ENCODE measurements at regions of chr7 and their contacts with region 1.

Region 1: DNA sequence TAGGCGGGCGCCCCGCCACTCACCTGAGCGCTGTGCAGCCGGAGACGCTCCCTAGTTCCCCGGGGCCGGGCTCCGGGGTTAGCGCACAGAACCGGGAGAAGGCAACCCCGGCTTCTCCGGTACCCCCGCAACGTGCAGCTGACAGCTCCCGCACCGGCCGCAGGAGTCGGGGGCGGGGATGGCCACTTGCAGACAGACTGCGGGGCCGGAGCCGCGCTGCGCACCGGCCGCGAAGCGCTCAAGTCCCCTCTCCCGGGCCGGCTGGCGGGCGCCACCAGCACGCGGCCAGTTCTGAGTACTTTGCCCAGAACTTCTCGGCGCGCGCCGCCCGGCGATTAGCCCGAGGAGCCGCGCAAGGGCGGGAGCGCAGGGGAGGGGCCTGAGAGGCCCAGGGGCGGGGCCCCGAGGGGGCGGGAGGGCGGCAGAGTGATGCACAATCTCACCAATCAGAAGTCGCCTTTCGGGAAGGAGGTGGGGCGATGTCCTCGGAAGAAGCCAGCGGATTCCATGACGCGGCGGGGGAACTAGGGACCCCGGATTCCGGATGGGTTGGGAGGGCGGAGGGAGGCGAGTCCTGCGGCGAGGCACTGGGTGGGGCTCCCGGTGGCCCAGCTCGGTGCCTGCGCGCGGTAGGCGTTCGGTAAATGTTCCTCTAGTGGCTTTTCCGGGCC is at the start of gene OSBPL3:
- DNase-seq: peak; percentile 97
- H3K4me3 ChIP-seq: peak within 1 kb of the TSS; percentile 77 to 98 (median 86)
- H3K27ac ChIP-seq: peak within 1 kb of the TSS; percentile 86 to 90 (median 89)
- H3K4me1 ChIP-seq: peaks cover 0 to 30% (median 17%) of the 10 kb centered on the region in 4 donors
- H3K27me3 ChIP-seq: no peaks in the 10 kb centered on the region
- CTCF ChIP-seq: no peak
- EP300 ChIP-seq: no peak
- POLR2A ChIP-seq: peak; percentile 71
- total RNA-seq, gene OSBPL3: 6.7 to 20.6 (median 8.0) TPM

Region 2: GRCh38 chr7:25069900-25070443 is 90.0 kb after region 1 on chr7:
- in situ Hi-C with region 1: loop called in 1 of 4 experiments (anchors 10 kb)
- intact Hi-C with region 1: loop called (anchors 10 kb)
- DNase-seq: peak; percentile 39
- H3K4me3 ChIP-seq: peak overlapping the region in 3 of 4 donors; percentile 22 to 47 (median 24)
- H3K27ac ChIP-seq: no peak overlapping the region
- H3K4me1 ChIP-seq: peaks cover 0 to 11% (median 3%) of the 10 kb centered on the region in 4 donors
- H3K27me3 ChIP-seq: no peaks in the 10 kb centered on the region
- CTCF ChIP-seq: peak; percentile 86 to 96 (median 89)
- EP300 ChIP-seq: no peak
- POLR2A ChIP-seq: no peak

Region 3: DNA sequence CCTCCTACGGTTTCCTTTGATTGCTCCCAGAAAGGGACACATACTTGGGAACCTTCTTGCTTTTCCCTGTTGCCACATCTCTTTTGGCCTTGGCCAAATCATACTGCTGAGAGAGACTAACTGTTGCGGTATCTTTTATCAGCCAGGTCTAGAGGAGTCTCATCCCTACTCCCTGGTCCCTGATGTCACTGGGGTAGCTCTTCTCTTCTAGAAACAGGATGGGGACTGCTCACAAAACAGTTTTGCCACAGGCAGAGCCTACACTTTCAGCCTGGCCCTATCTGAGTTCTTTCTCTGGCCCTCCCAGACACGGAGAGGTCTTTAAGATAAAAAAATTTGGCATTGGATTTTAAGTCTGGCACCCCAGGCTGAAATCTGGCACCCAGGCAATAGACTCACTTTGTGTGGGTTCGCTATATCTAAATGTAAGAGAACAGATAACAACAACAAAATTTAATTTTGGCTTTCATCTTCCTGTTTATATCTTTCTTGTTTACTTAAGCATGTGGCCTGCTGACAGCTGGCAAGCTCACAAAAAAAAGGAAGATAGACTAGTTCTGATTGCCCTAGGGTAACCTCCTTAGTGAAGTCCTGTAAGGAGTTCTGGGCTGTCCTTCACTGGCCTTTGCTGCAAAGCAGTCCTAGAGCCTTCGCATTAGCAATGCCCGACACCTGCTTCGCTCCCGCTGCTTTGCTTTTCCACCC is 476.6 kb after region 1 on chr7:
- in situ Hi-C with region 1: no loop called
- intact Hi-C with region 1: no loop called
- DNase-seq: peak; percentile 39
- H3K4me3 ChIP-seq: no peak overlapping the region
- H3K27ac ChIP-seq: peak overlapping the region; percentile 53 to 71 (median 64)
- H3K4me1 ChIP-seq: peaks cover 0 to 47% (median 17%) of the 10 kb centered on the region in 4 donors
- H3K27me3 ChIP-seq: no peaks in the 10 kb centered on the region
- CTCF ChIP-seq: no peak
- EP300 ChIP-seq: no peak
- POLR2A ChIP-seq: no peak

Region 4: GRCh38 chr7:26224359-26224758 is 1244.4 kb after region 1 on chr7:
- in situ Hi-C with region 1: no loop called
- intact Hi-C with region 1: no loop called
- DNase-seq: no peak
- H3K4me3 ChIP-seq: no peak overlapping the region
- H3K27ac ChIP-seq: no peak overlapping the region
- H3K4me1 ChIP-seq: no peaks in the 10 kb centered on the region
- H3K27me3 ChIP-seq: peaks cover 5% of the 10 kb centered on the region
- CTCF ChIP-seq: no peak
- EP300 ChIP-seq: no peak
- POLR2A ChIP-seq: no peak